ENCODE measurements at regions of chr3 and their contacts with region 1.

Region 1: GRCh38 chr3:116815831-116816588 is 106.4 kb downstream of the TUSC7 start:
- DNase-seq: no peak
- H3K4me3 ChIP-seq: no peak overlapping the region
- H3K27me3 ChIP-seq: no peaks in the 10 kb centered on the region
- CTCF ChIP-seq: no peak

Region 2: DNA sequence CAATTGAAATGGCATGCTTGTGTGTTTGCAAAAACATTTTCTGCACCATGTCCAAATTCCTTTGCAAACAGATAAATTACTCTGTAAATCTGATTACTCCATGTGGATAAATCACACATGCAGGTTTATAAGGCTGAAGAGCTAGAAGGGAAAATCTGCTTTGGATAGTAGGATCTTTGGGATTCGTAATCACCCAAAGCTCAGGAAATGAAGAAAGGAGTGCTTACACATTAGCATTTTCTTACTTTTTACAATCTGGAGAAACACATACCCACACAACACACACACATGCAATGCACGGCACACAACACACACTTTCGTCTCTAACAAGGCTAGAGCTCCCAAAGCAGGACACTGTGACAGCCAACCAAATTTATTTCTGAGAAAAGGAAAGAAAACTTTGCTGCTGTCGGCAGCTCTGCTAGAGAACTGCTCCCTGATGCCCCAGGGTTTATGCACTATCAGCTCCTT is 372.8 kb before region 1 on chr3:
- CTCF ChIA-PET with region 1: no interaction called
- POLR2A ChIA-PET with region 1: interaction called, 13 read pairs
- DNase-seq: no peak
- H3K4me3 ChIP-seq: no peak overlapping the region
- H3K27me3 ChIP-seq: no peaks in the 10 kb centered on the region
- CTCF ChIP-seq: no peak

Measured in BJ (cell line).